ENCODE measurements at regions of chr12 and their contacts with region 1.

Region 1: GRCh38 chr12:98743347-98743953 is 98.4 kb downstream of the APAF1 start:
- DNase-seq: peak; percentile 31
- H3K4me3 Mint-ChIP-seq: peak overlapping the region; percentile 18
- H3K27ac Mint-ChIP-seq: peak overlapping the region; percentile 28
- H3K4me1 Mint-ChIP-seq: peaks cover 58% of the 10 kb centered on the region
- H3K27me3 Mint-ChIP-seq: peaks cover 7% of the 10 kb centered on the region

Region 2: DNA sequence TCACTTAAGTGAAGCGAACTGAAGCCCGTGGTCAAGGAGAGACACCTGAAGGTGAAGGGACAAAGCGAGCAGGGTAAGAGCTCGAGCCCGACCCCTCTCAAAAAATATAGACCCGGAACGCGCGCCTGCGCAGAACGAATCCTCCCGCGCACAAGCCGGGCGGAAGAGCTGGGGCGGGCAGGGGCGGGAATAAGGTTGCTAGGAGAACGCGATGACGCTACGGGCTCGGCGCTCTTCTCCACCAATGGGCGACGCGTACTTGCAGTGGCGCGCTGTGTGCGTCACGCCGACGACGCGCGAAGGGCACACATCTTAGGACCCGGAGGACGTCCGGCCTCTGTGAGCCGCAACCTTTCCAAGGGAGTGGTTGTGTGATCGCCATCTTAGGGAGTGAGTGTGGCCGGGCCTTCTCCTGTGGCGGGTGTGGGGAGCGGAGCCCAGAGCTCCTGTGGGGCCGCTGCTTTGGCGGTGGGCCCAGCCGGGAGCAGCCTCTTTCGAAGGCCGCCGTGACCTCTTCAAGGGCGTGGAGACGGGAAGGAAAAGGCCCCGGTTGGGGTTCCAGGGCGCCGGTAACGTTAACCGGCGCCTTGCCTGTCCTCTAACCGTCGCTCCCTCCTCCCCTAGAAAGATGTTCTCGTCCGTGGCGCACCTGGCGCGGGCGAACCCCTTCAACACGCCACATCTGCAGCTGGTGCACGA is 149.9 kb before region 1 on chr12 and contains the start of gene SLC25A3:
- intact Hi-C with region 1: loop called (anchors 5 kb)
- DNase-seq: peak; percentile 92
- H3K4me3 Mint-ChIP-seq: peak within 1 kb of the TSS; percentile 91
- H3K27ac Mint-ChIP-seq: peak within 1 kb of the TSS; percentile 93
- H3K4me1 Mint-ChIP-seq: peaks cover 23% of the 10 kb centered on the region
- H3K27me3 Mint-ChIP-seq: no peaks in the 10 kb centered on the region
- total RNA-seq, gene SLC25A3: 619 and 622 TPM in 2 replicates

Region 3: DNA sequence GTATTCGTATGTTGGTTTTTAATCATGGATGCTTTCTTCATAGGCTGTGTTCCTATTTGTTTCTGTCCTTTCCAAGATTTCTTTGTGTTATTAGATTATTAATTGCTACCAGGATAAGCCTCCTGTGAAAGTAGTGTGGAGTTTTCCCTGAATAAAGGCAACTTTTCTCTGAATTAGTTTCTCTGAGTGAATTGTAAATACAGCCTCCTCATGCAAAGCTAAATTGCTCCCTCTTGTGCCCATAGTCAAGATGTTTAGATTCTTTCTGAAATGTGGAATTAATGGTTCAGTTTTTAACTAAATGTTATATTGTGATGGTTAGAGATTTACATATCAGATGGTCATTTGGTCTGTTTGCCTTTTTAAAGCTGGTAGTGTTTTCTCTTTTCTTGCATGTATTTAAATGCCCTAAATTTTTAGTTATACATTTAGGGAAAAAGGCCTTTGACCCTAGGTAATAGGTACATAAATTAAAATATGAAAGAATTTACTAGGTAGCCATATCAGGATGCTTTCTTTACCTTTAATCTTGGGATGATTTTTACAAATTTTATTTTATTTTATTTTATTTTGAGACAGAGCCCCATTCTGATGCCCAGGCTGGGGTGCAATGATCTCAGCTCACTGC is 89.5 kb before region 1 on chr12:
- intact Hi-C with region 1: loop called (anchors 5 kb)
- DNase-seq: no peak
- H3K4me3 Mint-ChIP-seq: no peak overlapping the region
- H3K27ac Mint-ChIP-seq: no peak overlapping the region
- H3K4me1 Mint-ChIP-seq: peaks cover 20% of the 10 kb centered on the region
- H3K27me3 Mint-ChIP-seq: no peaks in the 10 kb centered on the region

Region 4: GRCh38 chr12:98725476-98726247 is 17.8 kb before region 1 on chr12:
- intact Hi-C with region 1: loop called (anchors 1 kb)
- DNase-seq: peak; percentile 34
- H3K4me3 Mint-ChIP-seq: no peak overlapping the region
- H3K27ac Mint-ChIP-seq: peak overlapping the region; percentile 67
- H3K4me1 Mint-ChIP-seq: peaks cover 19% of the 10 kb centered on the region
- H3K27me3 Mint-ChIP-seq: no peaks in the 10 kb centered on the region

Measured in activated T-helper 2 cell treated with anti-CD3 and anti-CD28 coated beads, Interferon-gamma antibody, Interleukin-2, Interleukin-4, amounts not matched to agents 10 μg/mL and 5 μg/mL and 100 μg/mL, durations not matched to agents 14 hours and 24 hours and 36 hours (primary cell).